Mammary epithelial cell (primary cell): ENCODE measurements at regions of chr4 and their contacts with region 1.

Region 1: GRCh38 chr4:77600521-77601451 is 4.8 kb upstream of the CXCL13 start:
- DNase-seq: peak; percentile 23
- H3K4me3 ChIP-seq: no peak overlapping the region
- H3K27ac ChIP-seq: no peak overlapping the region
- H3K4me1 ChIP-seq: peaks cover 10% of the 10 kb centered on the region
- H3K27me3 ChIP-seq: no peaks in the 10 kb centered on the region
- CTCF ChIP-seq: peak; percentile 88 to 92

Region 2: GRCh38 chr4:77433418-77433733 is 167.4 kb before region 1 on chr4:
- CTCF ChIA-PET with region 1: interaction called, 3 read pairs
- dilution Hi-C with region 1: no loop called
- in situ Hi-C with region 1: no loop called
- intact Hi-C with region 1: loop called (anchors 1 kb)
- DNase-seq: peak; percentile 44
- H3K4me3 ChIP-seq: no peak overlapping the region
- H3K27ac ChIP-seq: no peak overlapping the region
- H3K4me1 ChIP-seq: no peaks in the 10 kb centered on the region
- H3K27me3 ChIP-seq: no peaks in the 10 kb centered on the region
- CTCF ChIP-seq: peak; percentile 46 to 66

Region 3: DNA sequence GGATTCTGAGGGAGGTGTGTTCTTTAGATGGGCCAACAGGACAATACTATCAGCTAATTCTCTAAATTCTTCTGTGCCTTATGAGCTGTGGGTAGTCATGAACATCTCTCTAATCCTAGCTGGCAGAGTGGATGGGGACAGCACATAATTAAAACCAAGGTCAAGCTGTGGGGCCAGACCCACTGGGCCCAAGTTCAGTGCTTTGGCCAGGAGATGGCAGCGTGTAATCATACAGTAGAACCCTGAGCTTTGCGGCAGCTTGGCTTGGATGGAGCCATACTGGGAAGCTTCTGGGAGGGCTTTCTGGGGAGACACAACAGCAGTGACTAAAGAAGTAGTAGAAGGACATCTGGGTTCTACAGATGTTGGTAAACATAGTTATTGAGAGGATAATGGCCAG is 135.5 kb before region 1 on chr4:
- CTCF ChIA-PET with region 1: interaction called, 18 read pairs
- dilution Hi-C with region 1: loop called (anchors 5 kb)
- in situ Hi-C with region 1: loop called (anchors 10 kb)
- intact Hi-C with region 1: loop called (anchors 1 kb)
- DNase-seq: peak; percentile 28
- H3K4me3 ChIP-seq: no peak overlapping the region
- H3K27ac ChIP-seq: no peak overlapping the region
- H3K4me1 ChIP-seq: no peaks in the 10 kb centered on the region
- H3K27me3 ChIP-seq: no peaks in the 10 kb centered on the region
- CTCF ChIP-seq: peak; percentile 54 to 74

Region 4: DNA sequence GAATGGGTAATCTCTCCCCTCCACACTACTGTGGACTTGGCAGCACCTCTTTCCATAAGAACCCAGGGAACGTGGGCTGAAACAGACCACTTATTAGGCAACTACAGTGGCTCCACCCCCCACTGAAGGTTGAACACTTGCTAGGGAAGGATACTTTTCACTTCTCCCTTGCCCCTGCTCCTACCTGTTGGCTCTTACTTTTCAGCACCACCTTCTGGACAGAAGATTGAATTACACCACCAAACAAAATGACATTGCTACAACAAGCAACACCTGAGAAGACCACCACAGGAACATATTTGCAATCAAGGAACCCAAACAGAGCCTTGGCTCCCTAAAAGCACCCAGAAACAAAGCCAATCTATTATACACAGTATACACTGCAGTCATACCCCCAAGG is 127.3 kb before region 1 on chr4:
- CTCF ChIA-PET with region 1: no interaction called
- dilution Hi-C with region 1: loop called (anchors 5 kb)
- in situ Hi-C with region 1: loop called (anchors 10 kb)
- intact Hi-C with region 1: loop called (anchors 2 kb)
- DNase-seq: no peak
- H3K4me3 ChIP-seq: no peak overlapping the region
- H3K27ac ChIP-seq: no peak overlapping the region
- H3K4me1 ChIP-seq: peaks cover 10% of the 10 kb centered on the region
- H3K27me3 ChIP-seq: peaks cover 1% of the 10 kb centered on the region
- CTCF ChIP-seq: peak; percentile 39 to 60

Region 5: DNA sequence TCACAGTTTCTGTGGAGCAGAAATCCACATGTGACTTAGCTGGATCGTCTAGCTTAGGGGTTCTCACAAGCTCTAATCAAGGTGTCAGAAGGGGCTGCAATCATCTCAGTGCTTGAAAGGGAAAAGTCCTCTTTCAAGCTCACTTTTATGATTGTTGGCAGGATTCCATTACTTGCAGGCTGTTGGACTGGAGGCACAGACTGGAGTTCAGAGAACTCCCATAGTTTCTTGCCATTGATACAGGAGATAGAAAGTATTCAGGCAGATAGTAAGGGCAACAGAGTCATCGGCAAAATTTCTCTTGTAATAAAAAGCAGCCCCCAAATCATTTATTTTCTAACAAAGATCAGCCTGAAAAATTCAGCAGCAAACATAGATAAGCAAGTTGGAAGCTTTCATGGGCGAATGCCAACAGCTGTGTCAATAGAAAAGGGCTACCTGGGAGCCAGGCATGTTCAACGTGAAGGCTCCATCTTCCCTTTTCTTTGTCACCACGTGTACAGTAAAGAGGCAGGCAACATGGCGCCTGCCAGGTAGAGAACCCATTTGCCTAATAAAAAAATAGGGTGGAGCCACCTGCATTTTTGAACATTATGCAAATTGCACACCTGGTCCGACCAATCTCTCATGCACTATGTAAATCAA is 69.3 kb after region 1 on chr4:
- CTCF ChIA-PET with region 1: interaction called, 15 read pairs
- dilution Hi-C with region 1: no loop called
- in situ Hi-C with region 1: no loop called
- intact Hi-C with region 1: no loop called
- DNase-seq: no peak
- H3K4me3 ChIP-seq: no peak overlapping the region
- H3K27ac ChIP-seq: no peak overlapping the region
- H3K4me1 ChIP-seq: peaks cover 8% of the 10 kb centered on the region
- H3K27me3 ChIP-seq: no peaks in the 10 kb centered on the region
- CTCF ChIP-seq: no peak

Region 6: DNA sequence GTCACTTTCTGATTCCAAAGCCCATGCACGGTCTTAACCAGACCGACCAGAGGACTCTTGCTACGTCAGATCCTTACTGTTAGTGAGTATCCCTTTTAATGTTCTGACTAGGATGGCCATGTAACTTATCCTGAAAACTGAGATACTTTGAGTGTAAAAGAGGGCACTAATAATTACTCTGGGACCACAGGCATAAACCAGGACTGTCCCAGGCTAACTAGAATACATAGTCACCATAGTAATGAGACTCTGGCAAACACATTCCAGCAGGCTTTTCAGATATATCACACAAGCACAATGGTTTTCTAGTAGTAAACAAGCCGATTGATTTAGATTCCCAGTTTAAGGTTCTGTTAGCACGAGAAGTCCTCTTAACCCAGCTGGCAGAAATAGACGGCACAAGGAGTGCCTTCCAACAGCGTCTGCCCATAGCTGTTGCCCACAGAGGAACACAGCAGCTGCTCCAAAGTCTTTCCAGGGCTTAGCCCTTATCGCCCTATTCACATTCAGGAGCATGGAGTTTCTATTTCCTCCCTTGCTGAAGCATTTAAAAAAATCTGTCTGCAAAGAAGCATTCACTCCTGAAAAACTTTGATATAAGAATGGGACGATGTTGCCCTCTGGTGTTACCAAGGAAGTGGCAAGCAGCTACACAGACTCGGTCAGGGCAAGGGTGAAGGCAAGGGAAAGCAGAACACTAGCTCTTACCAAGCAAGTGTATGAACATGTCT is 97.2 kb after region 1 on chr4:
- CTCF ChIA-PET with region 1: no interaction called
- dilution Hi-C with region 1: no loop called
- in situ Hi-C with region 1: no loop called
- intact Hi-C with region 1: loop called (anchors 1 kb)
- DNase-seq: peak; percentile 64
- H3K4me3 ChIP-seq: no peak overlapping the region
- H3K27ac ChIP-seq: no peak overlapping the region
- H3K4me1 ChIP-seq: peaks cover 30% of the 10 kb centered on the region
- H3K27me3 ChIP-seq: no peaks in the 10 kb centered on the region
- CTCF ChIP-seq: peak; percentile 63 to 77

Region 7: DNA sequence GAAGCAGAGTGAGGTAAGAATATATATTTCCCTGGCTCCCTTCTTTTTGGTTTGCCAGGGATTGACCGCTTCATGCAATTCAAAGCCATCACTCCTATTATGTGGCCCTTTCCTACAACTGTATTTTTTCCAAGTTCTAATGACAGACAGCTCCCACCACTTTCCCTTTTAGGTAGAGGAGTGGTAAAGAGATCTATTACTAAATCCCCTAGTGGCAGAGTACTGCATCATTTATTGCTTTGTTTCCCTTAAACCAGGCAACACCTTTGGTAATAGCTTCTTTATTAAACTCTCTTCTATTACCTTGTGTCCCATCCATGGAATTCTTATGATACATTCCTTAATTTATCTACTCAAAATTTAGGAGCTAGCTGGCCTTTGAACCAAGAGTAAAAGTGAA is 127.6 kb after region 1 on chr4:
- CTCF ChIA-PET with region 1: no interaction called
- dilution Hi-C with region 1: no loop called
- in situ Hi-C with region 1: no loop called
- intact Hi-C with region 1: no loop called
- DNase-seq: no peak
- H3K4me3 ChIP-seq: no peak overlapping the region
- H3K27ac ChIP-seq: no peak overlapping the region
- H3K4me1 ChIP-seq: no peaks in the 10 kb centered on the region
- H3K27me3 ChIP-seq: no peaks in the 10 kb centered on the region
- CTCF ChIP-seq: peak in 1 of 2 donors; percentile 23

Region 8: DNA sequence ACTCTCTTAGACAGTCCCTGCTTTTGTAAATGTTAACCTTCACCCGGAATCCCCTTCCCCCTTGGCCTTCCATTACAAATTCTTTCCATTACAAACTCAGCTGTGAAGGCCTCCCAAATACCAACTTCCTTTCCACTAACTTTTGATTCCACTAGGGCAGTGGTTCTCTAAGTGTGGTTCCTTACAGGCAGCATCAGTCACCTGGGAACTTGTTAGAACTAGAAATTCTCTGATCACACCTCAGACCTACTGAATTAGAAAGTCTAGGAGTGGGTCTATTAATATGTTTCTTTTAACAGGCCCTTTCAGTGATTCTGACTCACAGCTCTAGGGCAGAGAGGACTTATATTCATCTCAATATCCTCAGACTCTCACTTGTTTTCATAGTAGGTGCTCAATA is 242.8 kb after region 1 on chr4:
- CTCF ChIA-PET with region 1: no interaction called
- dilution Hi-C with region 1: no loop called
- in situ Hi-C with region 1: no loop called
- intact Hi-C with region 1: no loop called
- DNase-seq: peak; percentile 54
- H3K4me3 ChIP-seq: no peak overlapping the region
- H3K27ac ChIP-seq: no peak overlapping the region
- H3K4me1 ChIP-seq: no peaks in the 10 kb centered on the region
- H3K27me3 ChIP-seq: no peaks in the 10 kb centered on the region
- CTCF ChIP-seq: no peak